ENCODE measurements at regions of chr21 and their contacts with region 1.

Region 1: GRCh38 chr21:34888569-34889319 is 160.4 kb downstream of the RUNX1 start:
- DNase-seq: peak; percentile 78 to 91
- H3K4me3 ChIP-seq: peak overlapping the region; percentile 97
- H3K27ac ChIP-seq: peak overlapping the region; percentile 99
- H3K4me1 ChIP-seq: peaks cover 1% of the 10 kb centered on the region; the same call in 1 of the 2 replicates
- H3K27me3 ChIP-seq: no peaks in the 10 kb centered on the region
- CTCF ChIP-seq: no peak

Region 2: DNA sequence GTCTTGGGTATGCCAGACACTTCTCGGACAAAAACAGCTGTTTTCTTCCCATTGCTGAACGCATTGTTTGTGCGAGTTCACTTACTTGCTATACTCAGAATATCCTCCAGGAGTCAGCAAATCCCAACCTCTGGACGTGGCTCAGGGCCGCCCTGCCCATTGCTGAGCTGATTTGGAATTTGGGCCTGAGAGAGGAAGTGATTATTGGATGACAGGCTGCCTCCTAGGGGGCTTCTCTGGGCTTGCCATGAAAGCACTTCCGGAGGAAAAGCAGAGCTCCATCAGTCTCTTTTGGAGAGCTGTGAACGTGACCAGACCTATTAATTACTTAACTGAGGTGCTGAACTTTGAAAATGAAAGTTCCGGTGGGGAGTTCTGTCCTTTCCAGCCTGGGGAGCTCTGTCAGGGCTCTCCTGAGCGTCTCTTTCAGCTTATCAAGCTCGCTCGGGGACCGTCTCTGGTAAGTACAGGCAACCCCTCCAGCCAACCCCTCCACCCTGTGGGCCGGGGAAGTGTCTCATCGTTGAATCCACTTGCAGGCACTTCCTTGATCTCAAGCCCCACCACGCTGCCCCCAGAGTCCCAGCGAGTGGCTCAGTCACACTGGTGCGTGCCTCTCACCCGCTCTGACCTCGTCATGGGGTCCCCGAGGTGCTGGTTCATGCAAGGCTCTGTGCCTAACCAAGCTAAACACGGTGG is 143.0 kb before region 1 on chr21:
- CTCF ChIA-PET with region 1: interaction called, 7 read pairs
- POLR2A ChIA-PET with region 1: interaction called, 6 read pairs
- intact Hi-C with region 1: loop called (anchors 1 kb)
- DNase-seq: peak; percentile 56
- H3K4me3 ChIP-seq: no peak overlapping the region
- H3K27ac ChIP-seq: no peak overlapping the region
- H3K4me1 ChIP-seq: peaks cover 12% of the 10 kb centered on the region
- H3K27me3 ChIP-seq: no peaks in the 10 kb centered on the region
- CTCF ChIP-seq: peak; percentile 86

Region 3: DNA sequence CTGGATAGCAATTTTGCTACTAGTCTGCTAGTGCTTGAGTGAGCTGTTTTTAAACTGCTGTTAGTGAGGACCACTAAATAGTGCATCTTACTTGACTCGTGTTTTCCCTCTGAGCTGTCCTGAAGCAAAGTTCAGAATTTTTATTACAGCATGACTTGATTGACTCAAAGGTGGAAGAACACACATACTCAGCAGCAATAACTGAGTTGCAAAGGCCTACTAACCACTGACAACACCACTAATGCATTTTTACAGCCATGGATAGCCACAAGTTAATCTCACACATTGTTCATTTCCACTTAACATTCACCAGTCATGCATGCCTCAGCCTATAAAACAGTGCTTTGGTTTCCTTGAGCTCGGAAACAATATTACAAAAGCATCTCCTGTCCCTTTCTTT is 11.6 kb after region 1 on chr21:
- CTCF ChIA-PET with region 1: no interaction called
- POLR2A ChIA-PET with region 1: interaction called, 10 read pairs
- intact Hi-C with region 1: no loop called
- DNase-seq: no peak
- H3K4me3 ChIP-seq: no peak overlapping the region
- H3K27ac ChIP-seq: no peak overlapping the region
- H3K4me1 ChIP-seq: no peaks in the 10 kb centered on the region
- H3K27me3 ChIP-seq: no peaks in the 10 kb centered on the region
- CTCF ChIP-seq: no peak

Region 4: GRCh38 chr21:35075546-35075945 is 186.8 kb after region 1 on chr21:
- CTCF ChIA-PET with region 1: no interaction called
- POLR2A ChIA-PET with region 1: no interaction called
- intact Hi-C with region 1: no loop called
- DNase-seq: no peak
- H3K4me3 ChIP-seq: no peak overlapping the region
- H3K27ac ChIP-seq: no peak overlapping the region
- H3K4me1 ChIP-seq: no peaks in the 10 kb centered on the region
- H3K27me3 ChIP-seq: no peaks in the 10 kb centered on the region
- CTCF ChIP-seq: no peak

Region 5: GRCh38 chr21:35138665-35139381 is 250.1 kb after region 1 on chr21:
- CTCF ChIA-PET with region 1: no interaction called
- POLR2A ChIA-PET with region 1: interaction called, 3 read pairs
- intact Hi-C with region 1: loop called (anchors 2 kb)
- DNase-seq: peak; percentile 74 to 95
- H3K4me3 ChIP-seq: peak overlapping the region; percentile 7; the same call in 1 of the 2 replicates
- H3K27ac ChIP-seq: peak overlapping the region; percentile 99
- H3K4me1 ChIP-seq: peaks cover 53% of the 10 kb centered on the region
- H3K27me3 ChIP-seq: no peaks in the 10 kb centered on the region
- CTCF ChIP-seq: no peak

Region 6: GRCh38 chr21:35400233-35400957 is 511.7 kb after region 1 on chr21:
- CTCF ChIA-PET with region 1: interaction called, 3 read pairs
- POLR2A ChIA-PET with region 1: interaction called, 6 read pairs
- intact Hi-C with region 1: loop called (anchors 1 kb)
- DNase-seq: peak; percentile 19 to 77
- H3K4me3 ChIP-seq: no peak overlapping the region
- H3K27ac ChIP-seq: peak overlapping the region; percentile 52
- H3K4me1 ChIP-seq: peaks cover 32% of the 10 kb centered on the region
- H3K27me3 ChIP-seq: no peaks in the 10 kb centered on the region
- CTCF ChIP-seq: peak; percentile 68

Region 7: DNA sequence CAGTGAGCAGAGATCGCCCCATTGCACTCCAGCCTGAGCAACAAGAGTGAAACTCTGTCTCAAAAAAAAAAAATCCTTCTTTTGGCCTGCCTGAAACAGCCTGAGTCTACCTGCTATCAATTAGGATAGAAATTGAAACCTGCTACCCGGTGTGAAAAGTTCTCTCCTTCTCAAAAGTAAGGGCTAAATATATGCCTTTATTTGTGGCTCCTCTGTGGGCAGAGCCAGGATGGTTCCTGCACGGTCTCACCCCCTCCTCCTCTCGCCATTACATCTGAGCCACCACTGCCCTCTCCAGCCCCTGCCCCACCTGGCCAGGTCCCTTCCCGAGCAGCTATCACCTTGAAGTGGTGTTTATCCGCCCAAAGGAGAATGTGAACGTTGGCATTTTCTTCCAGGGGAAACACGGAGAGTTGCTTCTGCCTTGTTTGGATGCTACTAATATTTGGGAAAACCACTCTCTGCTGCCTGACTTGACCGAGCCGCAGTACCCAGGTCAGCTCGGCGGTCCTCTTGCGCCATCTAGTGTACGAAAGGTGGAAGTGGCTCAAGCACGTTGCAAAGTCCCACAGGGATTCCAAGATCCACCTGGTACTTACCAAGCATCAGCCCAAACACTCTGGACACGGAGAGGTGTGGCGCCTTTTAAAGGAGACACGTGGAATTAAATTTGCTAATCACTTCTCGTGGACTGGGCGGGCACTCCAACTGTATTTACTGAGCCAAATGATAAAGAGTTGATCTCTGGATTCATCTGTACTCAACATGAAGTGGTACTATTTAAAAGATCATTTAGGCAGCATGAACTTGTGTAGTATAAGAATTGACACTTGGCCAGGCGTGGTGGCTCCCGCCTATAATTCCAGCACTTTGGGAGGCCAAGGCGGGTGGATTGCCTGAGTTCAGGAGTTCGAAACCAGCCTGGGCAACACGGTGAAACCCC is 1139.7 kb after region 1 on chr21:
- CTCF ChIA-PET with region 1: no interaction called
- POLR2A ChIA-PET with region 1: no interaction called
- intact Hi-C with region 1: loop called (anchors 5 kb)
- DNase-seq: peak; percentile 44 to 67
- H3K4me3 ChIP-seq: no peak overlapping the region
- H3K27ac ChIP-seq: no peak overlapping the region
- H3K4me1 ChIP-seq: no peaks in the 10 kb centered on the region
- H3K27me3 ChIP-seq: no peaks in the 10 kb centered on the region
- CTCF ChIP-seq: peak; percentile 83